Activated CD4-positive, alpha-beta memory T cell treated with anti-CD3 and anti-CD28 coated beads, Interleukin-2, amount 10 ng/mL, durations not matched to agents 7 days and 5 days (primary cell): ENCODE measurements at regions of chr21 and their contacts with region 1.

Region 1: GRCh38 chr21:32770871-32771523 is 558 bp downstream of the PAXBP1 start:
- DNase-seq: peak; percentile 69
- H3K4me3 Mint-ChIP-seq: peak overlapping the region; percentile 97
- H3K27ac Mint-ChIP-seq: peak overlapping the region; percentile 85
- H3K4me1 Mint-ChIP-seq: peaks cover 57% of the 10 kb centered on the region
- H3K27me3 Mint-ChIP-seq: peaks cover 3% of the 10 kb centered on the region

Region 2: GRCh38 chr21:32612075-32612998 is 158.7 kb before region 1 on chr21 and contains the start of gene CFAP298:
- CTCF ChIA-PET with region 1: interaction called, 11 read pairs
- POLR2A ChIA-PET with region 1: interaction called, 22 read pairs
- DNase-seq: peak; percentile 90
- H3K4me3 Mint-ChIP-seq: peak within 1 kb of the TSS; percentile 93
- H3K27ac Mint-ChIP-seq: peak within 1 kb of the TSS; percentile 85
- H3K4me1 Mint-ChIP-seq: peaks cover 27% of the 10 kb centered on the region
- H3K27me3 Mint-ChIP-seq: peaks cover 3% of the 10 kb centered on the region
- total RNA-seq, gene CFAP298: 34.0 to 34.7 TPM

Region 3: DNA sequence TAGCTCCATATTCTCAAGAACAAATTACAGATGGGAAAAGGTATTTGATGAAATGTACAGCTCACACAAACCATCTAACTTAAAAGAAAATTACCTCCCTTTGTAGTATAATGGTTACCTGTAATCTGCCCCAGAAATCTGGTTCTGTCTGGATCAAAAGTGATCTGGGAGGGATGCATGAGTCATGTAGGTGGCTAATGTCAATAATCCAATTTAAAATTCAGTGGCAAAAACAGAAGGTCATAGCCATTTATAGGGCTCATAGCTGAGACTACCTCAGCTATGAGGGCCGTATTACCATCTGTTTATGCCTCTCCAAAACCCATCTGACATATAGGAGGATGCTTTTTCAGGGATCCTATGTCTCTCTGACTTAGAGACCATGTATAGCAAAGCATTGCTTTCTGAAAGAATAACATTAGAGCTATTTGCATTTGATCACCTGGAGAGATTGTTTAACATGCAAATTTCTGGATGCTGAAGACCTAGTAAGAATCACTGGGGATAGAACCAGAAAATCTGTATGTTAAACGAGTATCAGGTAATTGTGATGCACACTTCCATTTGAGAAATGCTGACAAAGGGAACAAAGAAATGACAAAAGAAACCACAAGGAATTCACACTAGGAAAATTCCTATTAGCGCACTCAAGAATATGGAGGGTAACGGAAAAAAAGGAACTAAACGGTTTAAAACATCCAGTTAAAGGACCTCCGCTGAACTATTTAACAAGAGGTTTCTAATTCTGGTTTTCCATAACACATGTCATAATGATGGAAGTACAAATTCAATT is 17.0 kb before region 1 on chr21:
- CTCF ChIA-PET with region 1: interaction called, 5 read pairs
- POLR2A ChIA-PET with region 1: interaction called, 24 read pairs
- DNase-seq: no peak
- H3K4me3 Mint-ChIP-seq: no peak overlapping the region
- H3K27ac Mint-ChIP-seq: no peak overlapping the region
- H3K4me1 Mint-ChIP-seq: peaks cover 10% of the 10 kb centered on the region
- H3K27me3 Mint-ChIP-seq: no peaks in the 10 kb centered on the region

Region 4: GRCh38 chr21:32782698-32783097 is 11.7 kb after region 1 on chr21:
- CTCF ChIA-PET with region 1: interaction called, 4 read pairs
- POLR2A ChIA-PET with region 1: interaction called, 12 read pairs
- DNase-seq: no peak
- H3K4me3 Mint-ChIP-seq: no peak overlapping the region
- H3K27ac Mint-ChIP-seq: no peak overlapping the region
- H3K4me1 Mint-ChIP-seq: no peaks in the 10 kb centered on the region
- H3K27me3 Mint-ChIP-seq: no peaks in the 10 kb centered on the region